HEK293T (cell line): ENCODE measurements at regions of chr1 and their contacts with region 1.

Region 1: GRCh38 chr1:95043141-95043980 is 29.4 kb downstream of the ALG14 start:
- DNase-seq: peak; percentile 89

Region 2: GRCh38 chr1:94812985-94813384 is 230.4 kb before region 1 on chr1:
- CTCF ChIA-PET with region 1: interaction called, 11 read pairs
- POLR2A ChIA-PET with region 1: no interaction called
- DNase-seq: no peak

Region 3: DNA sequence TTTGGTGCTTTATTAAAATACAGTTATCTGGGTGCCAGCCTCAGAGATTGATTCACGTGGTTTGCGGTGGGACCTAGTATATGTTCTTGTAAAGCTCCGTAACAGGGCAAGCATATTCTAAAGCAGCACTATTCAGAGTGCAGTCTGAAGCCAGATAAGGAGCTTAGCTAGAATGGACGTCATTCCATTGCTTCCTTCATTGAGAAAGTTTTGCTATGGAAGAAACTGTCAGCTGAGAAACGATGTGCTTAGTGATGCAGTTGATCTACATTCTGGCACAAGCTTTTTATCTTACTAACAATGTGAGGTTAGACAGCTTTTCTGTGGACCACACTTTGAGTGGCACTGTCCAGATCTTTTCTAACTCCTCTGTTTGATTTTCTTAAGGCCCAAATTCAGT is 197.1 kb before region 1 on chr1:
- CTCF ChIA-PET with region 1: interaction called, 41 read pairs
- POLR2A ChIA-PET with region 1: no interaction called
- DNase-seq: no peak

Region 4: GRCh38 chr1:95067062-95067461 is 23.7 kb after region 1 on chr1:
- CTCF ChIA-PET with region 1: no interaction called
- POLR2A ChIA-PET with region 1: no interaction called
- DNase-seq: no peak

Region 5: GRCh38 chr1:95139039-95139438 is 95.7 kb after region 1 on chr1:
- CTCF ChIA-PET with region 1: no interaction called
- POLR2A ChIA-PET with region 1: no interaction called
- DNase-seq: no peak

Region 6: GRCh38 chr1:95207223-95207935 is 164.0 kb after region 1 on chr1:
- CTCF ChIA-PET with region 1: no interaction called
- POLR2A ChIA-PET with region 1: no interaction called
- DNase-seq: no peak

Region 7: GRCh38 chr1:96002969-96003964 is 959.9 kb after region 1 on chr1:
- CTCF ChIA-PET with region 1: no interaction called
- POLR2A ChIA-PET with region 1: no interaction called
- DNase-seq: no peak